Ovary (tissue), 10 donors: ENCODE measurements at regions of chr20 and their contacts with region 1.

Region 1: GRCh38 chr20:2246069-2246491 is 49.7 kb upstream of the TGM3 start:
- DNase-seq: no peak
- H3K4me3 ChIP-seq: no peak overlapping the region
- H3K27ac ChIP-seq: no peak overlapping the region
- H3K4me1 ChIP-seq: no peaks in the 10 kb centered on the region
- H3K27me3 ChIP-seq: no peaks in the 10 kb centered on the region
- CTCF ChIP-seq: no peak
- EP300 ChIP-seq: no peak
- POLR2A ChIP-seq: no peak

Region 2: GRCh38 chr20:2301164-2301622 is 55.1 kb after region 1 on chr20:
- intact Hi-C with region 1: loop called in 1 of 4 experiments (anchors 10 kb)
- DNase-seq: no peak
- H3K4me3 ChIP-seq: no peak overlapping the region
- H3K27ac ChIP-seq: no peak overlapping the region
- H3K4me1 ChIP-seq: no peaks in the 10 kb centered on the region
- H3K27me3 ChIP-seq: no peaks in the 10 kb centered on the region
- CTCF ChIP-seq: no peak
- EP300 ChIP-seq: no peak
- POLR2A ChIP-seq: no peak

Region 3: GRCh38 chr20:2637246-2637645 is 391.2 kb after region 1 on chr20:
- intact Hi-C with region 1: no loop called
- DNase-seq: no peak
- H3K4me3 ChIP-seq: no peak overlapping the region
- H3K27ac ChIP-seq: no peak overlapping the region
- H3K4me1 ChIP-seq: no peaks in the 10 kb centered on the region
- H3K27me3 ChIP-seq: no peaks in the 10 kb centered on the region
- CTCF ChIP-seq: no peak
- EP300 ChIP-seq: no peak
- POLR2A ChIP-seq: no peak